Activated CD4-positive, alpha-beta T cell treated with anti-CD3 and anti-CD28 coated beads for 36 hours (primary cell): ENCODE measurements at regions of chr20 and their contacts with region 1.

Region 1: GRCh38 chr20:41617931-41618806 is at the start of gene CHD6:
- DNase-seq: peak; percentile 99
- ATAC-seq: peak; percentile 99
- H3K4me3 Mint-ChIP-seq: peak within 1 kb of the TSS; percentile 75
- H3K27ac Mint-ChIP-seq: peak within 1 kb of the TSS; percentile 75
- H3K4me1 Mint-ChIP-seq: peaks cover 42% of the 10 kb centered on the region
- H3K27me3 Mint-ChIP-seq: no peaks in the 10 kb centered on the region
- total RNA-seq, gene CHD6: 30.2 to 34.0 TPM

Region 2: GRCh38 chr20:41317536-41318270 is 300.5 kb before region 1 on chr20 and contains the start of gene ZHX3:
- CTCF ChIA-PET with region 1: no interaction called
- POLR2A ChIA-PET with region 1: no interaction called
- intact Hi-C with region 1: loop called in 1 of 2 experiments (anchors 1 kb)
- DNase-seq: peak; percentile 98
- ATAC-seq: peak; percentile 99
- H3K4me3 Mint-ChIP-seq: peak within 1 kb of the TSS; percentile 84
- H3K27ac Mint-ChIP-seq: peak within 1 kb of the TSS; percentile 66
- H3K4me1 Mint-ChIP-seq: peaks cover 31% of the 10 kb centered on the region
- H3K27me3 Mint-ChIP-seq: no peaks in the 10 kb centered on the region
- total RNA-seq, gene ZHX3: 12.8 to 15.4 TPM

Region 3: GRCh38 chr20:41428285-41428684 is 189.9 kb before region 1 on chr20:
- CTCF ChIA-PET with region 1: no interaction called
- POLR2A ChIA-PET with region 1: no interaction called
- intact Hi-C with region 1: loop called in 1 of 2 experiments (anchors 5 kb)
- DNase-seq: peak; percentile 64
- ATAC-seq: peak; percentile 88
- H3K4me3 Mint-ChIP-seq: peak overlapping the region; percentile 8
- H3K27ac Mint-ChIP-seq: peak overlapping the region; percentile 92
- H3K4me1 Mint-ChIP-seq: peaks cover 65% of the 10 kb centered on the region
- H3K27me3 Mint-ChIP-seq: no peaks in the 10 kb centered on the region

Region 4: GRCh38 chr20:41436679-41437078 is 181.5 kb before region 1 on chr20:
- CTCF ChIA-PET with region 1: no interaction called
- POLR2A ChIA-PET with region 1: no interaction called
- intact Hi-C with region 1: loop called in 1 of 2 experiments (anchors 5 kb)
- DNase-seq: no peak
- ATAC-seq: peak; percentile 69
- H3K4me3 Mint-ChIP-seq: no peak overlapping the region
- H3K27ac Mint-ChIP-seq: peak overlapping the region; percentile 47
- H3K4me1 Mint-ChIP-seq: peaks cover 79% of the 10 kb centered on the region
- H3K27me3 Mint-ChIP-seq: no peaks in the 10 kb centered on the region

Region 5: DNA sequence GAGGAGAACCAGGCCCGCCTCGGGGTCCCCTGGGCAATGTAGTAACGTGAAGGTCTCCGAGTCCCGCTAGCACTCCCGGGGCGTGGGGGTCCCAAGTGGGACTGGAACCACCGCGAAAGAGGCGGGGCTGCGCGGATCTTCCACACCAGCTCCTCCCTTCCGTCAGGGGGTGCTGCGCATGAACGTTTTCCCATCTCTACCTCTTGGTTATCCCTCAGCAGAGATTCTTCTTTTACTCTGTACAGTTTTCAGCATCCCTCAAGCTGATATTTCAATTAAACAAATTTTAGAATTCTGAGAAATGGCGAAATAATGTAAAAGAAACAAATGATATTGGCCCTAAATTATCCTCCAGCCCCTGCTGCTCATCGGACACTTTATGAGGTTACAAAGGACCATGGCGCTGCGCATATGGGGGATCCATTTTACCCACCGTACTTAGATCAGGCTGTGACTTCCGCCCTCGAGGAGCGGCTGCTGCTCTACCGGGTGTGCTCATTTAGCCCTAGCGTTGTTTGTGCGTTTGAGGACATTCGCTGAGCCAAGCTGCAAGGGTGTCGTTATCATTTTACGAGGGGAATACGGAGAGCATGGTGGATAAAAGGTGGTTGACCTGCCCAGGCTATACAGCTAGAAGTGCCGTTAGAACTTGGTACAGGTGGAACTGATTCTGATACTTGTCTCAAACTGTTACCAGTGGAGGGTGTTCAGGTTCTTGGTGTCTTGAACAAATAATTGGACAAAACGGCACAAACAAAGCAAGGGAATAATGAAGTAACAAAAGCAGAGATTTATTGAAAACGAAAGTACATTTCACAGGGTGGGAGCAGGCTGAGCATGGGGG is 75.2 kb after region 1 on chr20:
- CTCF ChIA-PET with region 1: interaction called, 9 read pairs
- POLR2A ChIA-PET with region 1: no interaction called
- intact Hi-C with region 1: loop called (anchors 1 to 2 kb)
- DNase-seq: peak; percentile 88
- ATAC-seq: peak; percentile 90
- H3K4me3 Mint-ChIP-seq: peak overlapping the region; percentile 90
- H3K27ac Mint-ChIP-seq: peak overlapping the region; percentile 94
- H3K4me1 Mint-ChIP-seq: peaks cover 13% of the 10 kb centered on the region
- H3K27me3 Mint-ChIP-seq: peaks cover 2% of the 10 kb centered on the region